Activated T-helper 2 cell treated with anti-CD3 and anti-CD28 coated beads, Interferon-gamma antibody, Interleukin-2, Interleukin-4, amounts not matched to agents 10 μg/mL and 5 μg/mL and 100 μg/mL, durations not matched to agents 14 hours and 24 hours and 36 hours (primary cell): ENCODE measurements at regions of chr19 and their contacts with region 1.

Region 1: DNA sequence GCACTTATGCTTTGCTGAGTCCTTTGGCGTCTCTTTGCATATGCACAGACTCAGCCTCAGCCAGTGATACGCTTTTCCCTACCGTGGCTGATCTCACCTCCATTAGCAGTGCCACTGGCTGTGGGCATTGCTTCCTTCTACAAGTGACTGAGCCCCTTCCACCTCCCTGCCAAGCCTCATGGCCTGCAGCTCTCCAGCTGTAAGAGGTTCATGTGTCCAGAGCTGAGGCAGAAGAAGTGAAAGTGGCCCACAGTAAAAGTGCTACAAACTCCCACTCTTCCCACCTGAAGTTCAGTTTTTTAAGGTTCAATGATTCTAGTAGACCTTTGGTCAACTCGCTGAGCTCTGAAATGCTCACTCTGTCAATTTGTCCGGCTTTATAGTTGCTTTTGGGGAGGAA is 44.7 kb downstream of the SMARCA4 start:
- DNase-seq: no peak
- H3K4me3 Mint-ChIP-seq: no peak overlapping the region
- H3K27ac Mint-ChIP-seq: no peak overlapping the region
- H3K4me1 Mint-ChIP-seq: no peaks in the 10 kb centered on the region
- H3K27me3 Mint-ChIP-seq: no peaks in the 10 kb centered on the region

Region 2: GRCh38 chr19:10936661-10937084 is 68.8 kb before region 1 on chr19:
- intact Hi-C with region 1: loop called (anchors 10 kb)
- DNase-seq: no peak
- H3K4me3 Mint-ChIP-seq: no peak overlapping the region
- H3K27ac Mint-ChIP-seq: no peak overlapping the region
- H3K4me1 Mint-ChIP-seq: peaks cover 2% of the 10 kb centered on the region
- H3K27me3 Mint-ChIP-seq: no peaks in the 10 kb centered on the region

Region 3: GRCh38 chr19:10961073-10961860 is 44.3 kb before region 1 on chr19:
- intact Hi-C with region 1: no loop called
- DNase-seq: peak; percentile 16
- H3K4me3 Mint-ChIP-seq: peak overlapping the region; percentile 91
- H3K27ac Mint-ChIP-seq: peak overlapping the region; percentile 85
- H3K4me1 Mint-ChIP-seq: peaks cover 30% of the 10 kb centered on the region
- H3K27me3 Mint-ChIP-seq: no peaks in the 10 kb centered on the region